HEK293 (cell line): ENCODE measurements at regions of chr11 and their contacts with region 1.

Region 1: GRCh38 chr11:65817835-65818742 is 15.7 kb upstream of the SNX32 start:
- H3K4me3 ChIP-seq: peak overlapping the region; percentile 66
- H3K27ac ChIP-seq: peak overlapping the region; percentile 45; the same call in 1 of the 2 replicates
- H3K4me1 ChIP-seq: no peaks in the 10 kb centered on the region; the same call in 1 of the 2 replicates
- CTCF ChIP-seq: peak; percentile 92

Region 2: GRCh38 chr11:65703846-65704245 is 114.2 kb before region 1 on chr11:
- CTCF ChIA-PET with region 1: interaction called, 28 read pairs
- POLR2A ChIA-PET with region 1: interaction called, 3 read pairs
- H3K4me3 ChIP-seq: no peak overlapping the region
- H3K27ac ChIP-seq: no peak overlapping the region
- H3K4me1 ChIP-seq: no peaks in the 10 kb centered on the region
- CTCF ChIP-seq: no peak

Region 3: GRCh38 chr11:65720237-65720934 is 97.7 kb before region 1 on chr11 and contains the start of gene RNASEH2C:
- CTCF ChIA-PET with region 1: interaction called, 17 read pairs
- POLR2A ChIA-PET with region 1: interaction called, 6 read pairs
- H3K4me3 ChIP-seq: peak within 1 kb of the TSS; percentile 90
- H3K27ac ChIP-seq: peak within 1 kb of the TSS; percentile 76
- H3K4me1 ChIP-seq: no peaks in the 10 kb centered on the region
- CTCF ChIP-seq: no peak

Region 4: DNA sequence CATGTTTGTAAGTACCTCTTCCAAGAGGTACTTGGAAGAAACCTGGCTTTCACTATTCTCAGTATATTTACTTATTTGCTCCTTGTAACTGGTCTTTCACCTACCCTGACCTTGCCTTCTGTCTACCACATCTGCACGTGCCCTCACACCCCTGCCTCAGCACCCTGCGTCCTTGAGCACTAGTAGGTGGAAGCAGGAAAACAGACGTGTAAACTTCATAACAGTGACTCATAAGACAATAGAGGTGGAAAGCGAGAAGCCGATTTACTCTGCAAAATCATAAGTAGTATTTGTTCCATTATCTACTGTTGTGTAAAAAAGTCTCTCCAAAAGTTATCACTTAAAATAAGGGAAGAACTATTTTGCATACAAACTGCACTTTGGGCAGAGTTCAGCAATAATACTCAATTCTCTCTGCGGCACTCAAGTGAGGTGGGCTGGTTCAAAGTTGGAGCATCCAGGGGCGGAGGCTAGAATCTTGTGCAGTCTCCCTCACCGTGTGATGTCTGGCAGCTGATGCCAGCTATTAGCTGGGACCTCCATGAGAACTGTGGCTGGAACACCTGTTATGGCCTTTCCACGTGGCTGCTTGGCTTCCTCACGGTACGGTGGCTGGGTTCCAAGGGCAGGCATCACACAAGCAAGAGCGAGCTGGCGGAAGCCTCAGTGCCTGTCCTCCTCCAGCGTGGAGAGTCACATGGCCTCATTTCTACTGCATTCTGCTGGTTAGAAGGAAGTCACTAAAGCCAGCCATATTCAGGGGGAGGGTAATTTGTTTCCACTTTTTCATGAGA is 282.4 kb after region 1 on chr11:
- CTCF ChIA-PET with region 1: no interaction called
- POLR2A ChIA-PET with region 1: no interaction called
- H3K4me3 ChIP-seq: no peak overlapping the region
- H3K27ac ChIP-seq: no peak overlapping the region
- H3K4me1 ChIP-seq: peaks cover 6% of the 10 kb centered on the region
- CTCF ChIP-seq: no peak